Ovary (tissue), 10 donors: ENCODE measurements at regions of chr6 and their contacts with region 1.

Region 1: GRCh38 chr6:30714263-30714662 is 2.8 kb downstream of the MDC1 start:
- DNase-seq: no peak
- H3K4me3 ChIP-seq: no peak overlapping the region
- H3K27ac ChIP-seq: no peak overlapping the region
- H3K4me1 ChIP-seq: peaks cover 2% of the 10 kb centered on the region
- H3K27me3 ChIP-seq: no peaks in the 10 kb centered on the region
- CTCF ChIP-seq: no peak
- EP300 ChIP-seq: no peak
- POLR2A ChIP-seq: no peak

Region 2: DNA sequence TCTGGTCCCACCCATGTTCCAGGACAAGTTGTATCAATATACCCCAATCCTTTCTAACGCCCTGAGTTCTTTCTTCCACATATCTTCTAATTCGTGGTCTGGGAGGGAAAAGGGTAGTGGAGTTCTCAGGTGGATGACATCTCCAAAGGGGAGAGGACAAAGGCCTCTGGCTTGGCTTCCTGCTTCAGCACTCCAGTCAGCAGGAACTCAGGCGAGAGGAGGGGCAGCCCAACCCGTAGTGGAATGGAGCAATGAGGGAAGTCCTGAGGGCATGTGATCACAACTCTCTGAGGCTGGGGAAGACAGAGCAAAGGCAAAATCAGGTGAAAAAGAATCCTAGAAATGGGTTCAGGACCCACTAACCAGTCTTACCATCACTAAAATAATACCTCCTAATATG is 13.9 kb before region 1 on chr6:
- intact Hi-C with region 1: loop called in 1 of 4 experiments (anchors 2 kb)
- DNase-seq: no peak
- H3K4me3 ChIP-seq: no peak overlapping the region
- H3K27ac ChIP-seq: no peak overlapping the region
- H3K4me1 ChIP-seq: no peaks in the 10 kb centered on the region
- H3K27me3 ChIP-seq: no peaks in the 10 kb centered on the region
- CTCF ChIP-seq: no peak
- EP300 ChIP-seq: no peak
- POLR2A ChIP-seq: no peak